WTC11 (cell line): ENCODE measurements at regions of chr7 and their contacts with region 1.

Region 1: GRCh38 chr7:4791738-4792536 is 16.5 kb downstream of the AP5Z1 start:
- DNase-seq: peak; percentile 93
- ATAC-seq: peak; percentile 83
- H3K4me3 Mint-ChIP-seq: peak overlapping the region; percentile 54
- H3K27ac Mint-ChIP-seq: no peak overlapping the region
- H3K4me1 Mint-ChIP-seq: peaks cover 5% of the 10 kb centered on the region
- H3K27me3 Mint-ChIP-seq: no peaks in the 10 kb centered on the region
- CTCF ChIP-seq: peak; percentile 92

Region 2: GRCh38 chr7:4610768-4611467 is 181.0 kb before region 1 on chr7:
- CTCF ChIA-PET with region 1: interaction called, 12 read pairs
- POLR2A ChIA-PET with region 1: no interaction called
- DNase-seq: peak; percentile 36
- ATAC-seq: peak; percentile 74
- H3K4me3 Mint-ChIP-seq: no peak overlapping the region
- H3K27ac Mint-ChIP-seq: no peak overlapping the region
- H3K4me1 Mint-ChIP-seq: peaks cover 14% of the 10 kb centered on the region
- H3K27me3 Mint-ChIP-seq: peaks cover 4% of the 10 kb centered on the region; the same call in 1 of the 2 replicates
- CTCF ChIP-seq: peak; percentile 53

Region 3: GRCh38 chr7:4781366-4782069 is 10.4 kb before region 1 on chr7:
- CTCF ChIA-PET with region 1: interaction called, 75 read pairs
- POLR2A ChIA-PET with region 1: no interaction called
- DNase-seq: no peak
- ATAC-seq: no peak
- H3K4me3 Mint-ChIP-seq: no peak overlapping the region
- H3K27ac Mint-ChIP-seq: no peak overlapping the region
- H3K4me1 Mint-ChIP-seq: no peaks in the 10 kb centered on the region
- H3K27me3 Mint-ChIP-seq: no peaks in the 10 kb centered on the region
- CTCF ChIP-seq: no peak

Region 4: DNA sequence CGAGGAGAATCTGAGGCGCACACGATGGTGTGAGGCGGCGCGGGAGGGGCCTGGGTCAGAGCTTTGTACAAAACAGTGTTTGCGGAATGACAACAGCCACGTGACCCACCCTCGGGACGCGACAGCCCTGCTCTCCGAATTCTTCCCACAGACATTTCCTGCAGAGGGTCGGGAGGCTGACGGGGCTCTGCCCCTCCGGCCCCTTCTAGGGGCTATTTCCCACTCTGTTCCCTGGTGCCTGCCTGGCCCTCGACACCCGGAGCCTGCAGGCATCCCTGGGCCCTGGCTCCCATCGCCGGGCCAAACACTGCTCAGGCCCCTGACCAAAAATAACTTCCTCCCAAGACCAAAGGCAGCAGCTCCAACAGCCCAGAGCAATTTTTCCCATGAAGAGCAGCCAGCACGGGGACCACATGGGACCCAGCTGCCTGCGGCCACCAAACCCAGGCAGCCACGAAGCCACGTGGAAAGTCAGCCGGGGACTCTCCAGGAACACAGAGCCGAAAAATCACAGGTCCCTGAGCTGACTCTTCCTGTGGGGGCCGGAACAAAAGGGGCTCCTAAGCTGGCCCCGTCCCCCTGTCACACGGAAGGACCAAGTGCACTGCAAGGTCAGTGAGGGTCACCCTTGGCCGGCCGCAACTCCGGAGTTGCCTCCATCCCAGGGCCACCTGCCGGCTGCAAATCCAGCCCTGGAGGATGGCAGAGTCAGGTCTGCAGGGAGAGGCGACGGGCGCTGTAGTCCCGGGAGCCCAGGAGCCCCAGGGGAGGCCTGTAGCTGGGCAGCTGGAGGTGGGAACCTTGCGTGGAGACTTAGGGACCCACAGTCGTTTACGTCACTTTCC is 27.8 kb after region 1 on chr7:
- CTCF ChIA-PET with region 1: interaction called, 47 read pairs
- POLR2A ChIA-PET with region 1: no interaction called
- DNase-seq: no peak
- ATAC-seq: no peak
- H3K4me3 Mint-ChIP-seq: no peak overlapping the region
- H3K27ac Mint-ChIP-seq: no peak overlapping the region
- H3K4me1 Mint-ChIP-seq: no peaks in the 10 kb centered on the region
- H3K27me3 Mint-ChIP-seq: no peaks in the 10 kb centered on the region
- CTCF ChIP-seq: no peak

Region 5: DNA sequence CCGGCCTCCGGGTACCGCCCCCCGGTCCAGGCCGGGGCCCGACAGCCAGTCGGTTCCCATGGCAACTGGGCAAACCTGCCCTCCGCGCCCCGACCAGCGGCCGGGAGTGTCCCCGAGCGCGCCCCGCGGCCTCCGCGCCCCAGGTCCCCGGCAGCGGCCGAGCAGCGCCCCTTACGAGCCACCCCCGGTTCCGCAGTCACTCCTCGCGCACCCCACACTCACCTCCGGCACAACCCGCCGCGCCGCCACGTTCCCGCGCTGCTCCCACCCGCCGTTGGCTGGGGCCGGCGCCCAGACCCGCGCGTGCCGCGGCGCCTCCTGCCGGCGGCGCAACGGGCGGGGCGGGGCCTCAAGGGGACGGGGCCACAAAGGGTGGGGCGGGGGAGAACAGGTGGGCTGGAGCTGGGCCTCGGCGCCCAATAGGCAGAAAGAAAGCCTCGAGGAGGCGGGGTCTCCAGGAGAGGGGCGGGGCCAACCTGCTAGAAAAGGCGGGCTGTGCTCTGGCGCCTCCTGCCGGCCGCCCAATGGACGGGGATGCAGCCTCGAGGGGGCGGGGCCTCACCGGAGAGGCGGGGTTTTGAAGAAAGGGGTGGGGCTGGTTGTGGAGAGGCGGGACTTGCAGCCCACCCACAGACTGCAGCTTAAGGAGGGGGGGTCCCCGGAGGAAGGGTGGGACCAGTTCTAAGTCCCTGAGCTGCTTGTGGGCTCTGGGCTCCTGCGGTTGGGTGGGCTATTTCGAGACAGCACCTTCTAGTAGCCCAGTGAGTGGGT is 91.6 kb after region 1 on chr7 and contains the start of gene RADIL:
- CTCF ChIA-PET with region 1: interaction called, 72 read pairs
- POLR2A ChIA-PET with region 1: interaction called, 3 read pairs
- DNase-seq: peak; percentile 98
- ATAC-seq: peak; percentile 92
- H3K4me3 Mint-ChIP-seq: peak within 1 kb of the TSS; percentile 81
- H3K27ac Mint-ChIP-seq: peak within 1 kb of the TSS; percentile 50
- H3K4me1 Mint-ChIP-seq: peaks cover 13% of the 10 kb centered on the region
- H3K27me3 Mint-ChIP-seq: peaks cover 12% of the 10 kb centered on the region; the same call in 1 of the 2 replicates
- CTCF ChIP-seq: peak; percentile 88
- total RNA-seq, gene RADIL: 8.6 to 12.1 TPM (median 11.1 TPM) in 3 replicates

Region 6: DNA sequence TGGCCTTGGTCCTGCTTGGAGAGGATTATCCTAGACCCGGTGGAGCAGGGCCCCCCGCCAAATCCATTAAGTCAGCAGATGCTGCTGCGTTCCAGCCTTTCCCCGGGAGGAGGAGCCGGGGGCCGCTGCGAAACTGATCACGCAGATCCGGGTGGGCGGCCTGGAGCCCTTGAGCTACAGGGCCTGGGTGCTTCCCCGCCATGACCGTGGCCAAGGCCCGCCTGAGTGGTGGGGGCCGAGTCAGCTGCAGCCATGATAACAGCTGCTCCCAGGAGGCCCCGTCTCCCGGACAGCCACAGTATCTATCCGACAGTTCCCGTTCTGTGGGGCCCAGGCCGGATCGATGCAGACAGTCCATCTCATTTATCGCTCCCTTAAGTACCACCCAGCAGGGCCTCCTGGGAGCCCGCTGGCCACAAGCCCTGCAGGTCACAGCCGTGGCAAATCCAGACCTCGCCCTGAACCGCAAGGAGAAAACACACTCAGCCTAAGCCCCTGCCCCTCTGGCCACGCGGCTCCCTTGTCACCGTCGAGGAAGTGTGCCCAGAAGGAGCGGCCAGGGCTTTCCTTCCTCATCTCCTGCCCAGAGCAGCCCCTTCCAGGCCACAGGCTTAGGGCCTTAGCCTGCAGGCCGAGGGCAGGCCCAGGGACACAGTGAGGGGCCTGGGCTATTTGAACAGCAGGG is 456.4 kb after region 1 on chr7:
- CTCF ChIA-PET with region 1: interaction called, 10 read pairs
- POLR2A ChIA-PET with region 1: no interaction called
- DNase-seq: no peak
- ATAC-seq: no peak
- H3K4me3 Mint-ChIP-seq: no peak overlapping the region
- H3K27ac Mint-ChIP-seq: peak overlapping the region; percentile 60; the same call in 1 of the 2 replicates
- H3K4me1 Mint-ChIP-seq: peaks cover 7% of the 10 kb centered on the region
- H3K27me3 Mint-ChIP-seq: no peaks in the 10 kb centered on the region; the same call in 1 of the 2 replicates
- CTCF ChIP-seq: no peak